Dendritic cell treated with granulocyte-macrophage colony-stimulating factor and Interleukin-4, amounts not matched to agents 40 ng/mL and 50 ng/mL, for 4 days (primary cell): ENCODE measurements at regions of chr6 and their contacts with region 1.

Region 1: GRCh38 chr6:110800196-110800838 is 15.0 kb downstream of the CDK19 start:
- H3K4me3 Mint-ChIP-seq: no peak overlapping the region
- H3K27ac Mint-ChIP-seq: no peak overlapping the region
- H3K4me1 Mint-ChIP-seq: peaks cover 44% of the 10 kb centered on the region
- H3K27me3 Mint-ChIP-seq: no peaks in the 10 kb centered on the region

Region 2: GRCh38 chr6:110756817-110757216 is 43.5 kb before region 1 on chr6:
- intact Hi-C with region 1: loop called (anchors 10 kb)
- H3K4me3 Mint-ChIP-seq: no peak overlapping the region
- H3K27ac Mint-ChIP-seq: no peak overlapping the region
- H3K4me1 Mint-ChIP-seq: peaks cover 25% of the 10 kb centered on the region
- H3K27me3 Mint-ChIP-seq: no peaks in the 10 kb centered on the region

Region 3: GRCh38 chr6:111113336-111114086 is 313.2 kb after region 1 on chr6:
- intact Hi-C with region 1: no loop called
- H3K4me3 Mint-ChIP-seq: peak overlapping the region; percentile 41
- H3K27ac Mint-ChIP-seq: peak overlapping the region; percentile 93
- H3K4me1 Mint-ChIP-seq: peaks cover 22% of the 10 kb centered on the region
- H3K27me3 Mint-ChIP-seq: no peaks in the 10 kb centered on the region